ENCODE measurements at regions of chr13 and their contacts with region 1.

Region 1: DNA sequence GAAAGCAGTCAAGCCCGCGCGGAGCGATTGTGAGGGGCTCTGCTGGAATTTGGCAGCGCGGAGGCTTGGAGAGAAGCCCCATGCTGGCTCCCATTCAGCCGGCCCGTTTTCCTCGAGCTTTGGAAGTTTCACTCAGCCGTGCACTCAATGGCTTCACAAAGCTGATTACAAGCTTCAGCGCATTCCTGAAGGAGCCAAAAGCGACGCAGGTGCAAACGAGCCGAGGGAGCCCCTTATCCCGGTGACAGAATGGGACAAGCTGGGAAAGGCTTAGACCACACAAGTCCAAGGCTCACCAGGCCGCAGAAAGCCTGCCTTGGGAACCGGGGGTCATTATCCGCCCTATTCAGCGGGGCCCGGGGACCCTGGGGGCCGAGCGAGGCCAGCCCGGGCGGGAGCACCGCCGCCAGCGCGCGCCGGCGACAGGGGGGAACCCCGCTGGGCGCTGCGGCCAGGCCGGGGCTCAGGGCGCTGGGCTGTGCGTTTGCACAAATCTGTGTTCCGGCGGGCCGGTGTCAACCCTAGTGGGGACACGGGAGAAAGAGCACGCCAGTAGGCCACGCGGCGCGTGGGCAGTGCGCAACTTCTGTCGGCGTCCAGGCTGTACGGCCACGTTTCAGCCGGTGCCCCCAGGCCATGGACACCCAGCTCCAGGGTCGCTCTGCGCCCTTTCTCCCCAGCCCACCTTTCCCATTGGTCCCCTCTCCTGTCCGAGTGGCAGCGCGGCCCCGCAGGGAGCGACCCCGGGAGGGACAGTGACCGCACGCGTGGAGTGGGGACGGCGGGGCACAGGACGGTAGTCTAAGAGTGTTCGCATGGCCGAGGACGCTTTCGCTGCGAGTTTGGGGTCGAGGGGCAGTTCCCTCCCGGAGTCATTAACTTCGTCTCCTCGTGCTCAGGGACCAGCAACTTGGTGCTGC is 37.3 kb downstream of the SOX1 start:
- DNase-seq: no peak
- H3K4me3 ChIP-seq: no peak overlapping the region
- H3K27ac ChIP-seq: no peak overlapping the region
- H3K4me1 ChIP-seq: peaks cover 0 to 22% (median 0%) of the 10 kb centered on the region in 4 donors
- H3K27me3 ChIP-seq: peaks cover 0 to 69% of the 10 kb centered on the region in 2 donors
- CTCF ChIP-seq: no peak

Region 2: GRCh38 chr13:110499621-110500281 is 1604.5 kb before region 1 on chr13:
- intact Hi-C with region 1: no loop called
- DNase-seq: no peak
- H3K4me3 ChIP-seq: no peak overlapping the region
- H3K27ac ChIP-seq: peak overlapping the region in 1 of 2 donors; percentile 25
- H3K4me1 ChIP-seq: no peaks in the 10 kb centered on the region
- H3K27me3 ChIP-seq: no peaks in the 10 kb centered on the region
- CTCF ChIP-seq: no peak

Region 3: DNA sequence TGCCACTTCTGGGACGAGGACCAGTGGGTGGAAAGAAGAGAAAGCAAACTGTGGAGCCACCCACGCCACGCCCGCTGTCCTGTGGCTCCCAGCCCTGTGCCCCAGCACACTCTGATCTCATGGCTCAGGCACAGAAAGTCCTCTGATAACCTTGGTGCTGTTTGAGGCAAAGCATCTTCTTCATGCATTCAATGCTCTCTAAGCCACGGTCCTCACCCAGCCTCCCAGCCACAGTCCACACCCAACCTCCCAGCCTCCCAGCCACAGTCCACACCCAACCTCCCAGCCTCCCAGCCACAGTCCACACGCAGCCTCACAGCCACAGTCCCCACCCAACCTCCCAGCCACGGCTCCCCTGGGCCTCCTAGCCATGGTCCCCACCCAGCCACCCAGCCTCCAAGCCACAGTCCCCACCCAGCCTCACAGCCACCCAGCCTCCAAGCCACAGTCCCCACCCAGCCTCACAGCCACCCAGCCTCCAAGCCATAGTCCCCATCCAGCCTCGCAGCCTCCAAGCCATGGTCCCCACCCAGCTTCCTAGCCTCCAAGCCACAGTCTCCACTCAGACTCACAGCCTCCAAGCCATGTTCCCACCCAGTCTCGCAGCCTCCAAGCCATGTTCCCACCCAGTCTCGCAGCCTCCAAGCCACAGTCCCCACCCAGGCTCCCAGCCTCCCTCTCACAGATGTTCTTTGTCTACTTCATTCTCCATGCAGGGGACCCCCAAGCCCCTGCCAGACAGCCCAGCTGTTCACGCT is 37.6 kb after region 1 on chr13:
- intact Hi-C with region 1: loop called (anchors 2 kb)
- DNase-seq: peak in 1 of 2 donors; percentile 58
- H3K4me3 ChIP-seq: no peak overlapping the region
- H3K27ac ChIP-seq: no peak overlapping the region
- H3K4me1 ChIP-seq: no peaks in the 10 kb centered on the region
- H3K27me3 ChIP-seq: peaks cover 0 to 11% of the 10 kb centered on the region in 2 donors
- CTCF ChIP-seq: no peak

Region 4: DNA sequence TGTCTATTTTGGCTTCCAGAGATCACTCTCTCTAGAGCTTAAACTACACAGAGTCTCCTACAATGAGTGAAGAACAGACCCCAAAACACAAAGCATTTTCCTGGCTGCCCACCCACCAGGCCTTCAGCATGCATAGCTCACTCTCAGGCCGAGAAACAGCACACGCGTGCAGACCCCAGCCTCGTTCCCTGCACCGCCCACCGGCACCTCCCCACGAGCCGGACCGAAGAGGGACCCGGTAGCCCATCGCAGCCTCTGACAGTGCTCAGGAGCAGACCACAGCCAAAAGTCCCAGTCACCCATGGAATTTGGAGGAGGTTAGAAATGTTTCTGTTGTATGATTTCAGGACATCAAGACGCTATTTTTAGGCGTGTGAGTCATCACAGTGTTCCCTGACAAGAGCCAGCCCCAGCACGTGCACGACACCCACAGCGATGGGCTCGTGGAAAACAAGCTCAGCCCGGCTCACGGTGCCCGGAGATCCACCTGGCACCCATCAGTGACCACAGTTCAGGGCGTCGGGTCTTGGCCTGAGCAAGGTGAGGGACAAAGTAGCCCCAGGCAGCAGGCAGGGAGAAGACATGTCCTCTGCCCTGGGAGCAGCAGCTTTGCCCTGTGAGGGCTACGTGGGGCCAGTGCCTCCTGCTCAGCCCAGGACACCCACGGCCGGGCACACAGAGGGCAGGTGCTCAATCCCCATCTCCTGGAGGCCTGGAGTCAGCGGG is 221.9 kb after region 1 on chr13:
- intact Hi-C with region 1: no loop called
- DNase-seq: no peak
- H3K4me3 ChIP-seq: no peak overlapping the region
- H3K27ac ChIP-seq: no peak overlapping the region
- H3K4me1 ChIP-seq: peaks cover 0 to 7% (median 3%) of the 10 kb centered on the region in 4 donors
- H3K27me3 ChIP-seq: peaks cover 0 to 34% of the 10 kb centered on the region in 2 donors
- CTCF ChIP-seq: no peak